Activated B cell treated with CpG ODN at 0.5 μM for 24 hours (primary cell): ENCODE measurements at regions of chr3 and their contacts with region 1.

Region 1: DNA sequence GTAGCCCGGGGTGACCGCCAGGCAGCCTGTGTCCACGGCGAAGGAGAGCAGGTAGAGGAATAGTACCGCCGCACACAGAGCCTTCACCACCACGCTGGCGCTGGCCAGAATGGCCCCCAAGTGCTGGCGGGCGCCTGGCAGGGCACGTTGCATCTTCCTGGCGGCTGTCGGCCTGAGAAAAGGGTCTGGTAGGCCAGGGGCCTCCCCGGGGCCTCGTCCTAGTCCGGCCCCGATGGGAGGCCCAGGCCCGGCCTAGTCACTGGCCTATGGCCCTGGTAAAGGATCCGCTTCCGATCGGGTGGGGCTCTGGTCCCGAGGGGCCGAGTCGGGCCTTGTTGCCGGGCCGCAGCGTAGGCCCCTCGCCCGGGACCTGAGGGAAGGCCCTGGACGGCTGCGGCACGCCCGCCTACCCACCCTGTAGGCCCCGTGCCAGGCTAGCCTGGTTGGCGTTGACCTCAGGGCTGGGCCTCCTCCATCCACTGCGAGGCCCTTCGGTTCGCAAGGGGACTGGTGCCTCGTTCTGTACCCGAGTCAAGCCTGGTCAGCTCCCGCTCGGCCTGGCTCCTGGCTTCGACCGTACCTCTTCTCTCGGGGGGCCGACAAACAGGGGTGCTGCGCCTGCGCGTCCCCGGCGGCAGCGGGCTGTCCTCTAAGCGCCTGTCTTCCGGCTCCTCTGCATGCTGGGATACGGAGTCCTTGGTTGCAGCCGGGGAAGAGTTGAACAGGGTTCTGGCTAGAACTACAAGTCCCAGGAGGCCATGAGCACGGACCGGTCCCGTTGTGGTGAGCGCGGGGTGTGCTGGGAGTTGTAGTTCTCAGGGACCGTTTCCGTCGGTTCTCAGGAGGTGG is at the start of gene TMEM115:
- DNase-seq: peak; percentile 88
- ATAC-seq: peak; percentile 100
- H3K4me3 Mint-ChIP-seq: peak within 1 kb of the TSS; percentile 96
- H3K27ac Mint-ChIP-seq: peak within 1 kb of the TSS; percentile 89
- H3K4me1 Mint-ChIP-seq: peaks cover 49% of the 10 kb centered on the region
- H3K27me3 Mint-ChIP-seq: no peaks in the 10 kb centered on the region
- CTCF ChIP-seq: no peak
- total RNA-seq, gene TMEM115: 18.7 and 19.6 TPM in 2 replicates

Region 2: DNA sequence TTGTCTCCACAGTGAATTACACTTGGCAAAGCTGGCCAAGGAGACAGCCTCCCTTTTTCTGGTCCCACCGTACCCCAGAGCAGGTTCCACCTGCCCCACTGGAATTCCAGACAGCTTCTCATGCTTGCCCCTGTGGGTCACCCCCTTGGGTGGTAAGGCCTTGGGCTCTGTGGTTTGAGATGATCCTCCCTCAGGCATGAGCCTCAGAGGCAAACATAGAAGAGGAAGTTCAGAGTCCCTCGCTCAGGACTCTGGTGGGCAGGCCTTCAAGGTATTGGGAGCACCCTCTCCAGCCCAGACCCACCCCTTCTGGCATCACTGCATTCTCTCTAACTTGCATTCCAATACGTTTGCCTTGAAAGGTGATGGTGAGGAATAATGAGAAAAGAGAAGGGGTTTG is 527.8 kb before region 1 on chr3:
- CTCF ChIA-PET with region 1: no interaction called
- POLR2A ChIA-PET with region 1: no interaction called
- intact Hi-C with region 1: no loop called
- DNase-seq: no peak
- ATAC-seq: no peak
- H3K4me3 Mint-ChIP-seq: no peak overlapping the region
- H3K27ac Mint-ChIP-seq: no peak overlapping the region
- H3K4me1 Mint-ChIP-seq: peaks cover 3% of the 10 kb centered on the region
- H3K27me3 Mint-ChIP-seq: no peaks in the 10 kb centered on the region
- CTCF ChIP-seq: no peak

Region 3: DNA sequence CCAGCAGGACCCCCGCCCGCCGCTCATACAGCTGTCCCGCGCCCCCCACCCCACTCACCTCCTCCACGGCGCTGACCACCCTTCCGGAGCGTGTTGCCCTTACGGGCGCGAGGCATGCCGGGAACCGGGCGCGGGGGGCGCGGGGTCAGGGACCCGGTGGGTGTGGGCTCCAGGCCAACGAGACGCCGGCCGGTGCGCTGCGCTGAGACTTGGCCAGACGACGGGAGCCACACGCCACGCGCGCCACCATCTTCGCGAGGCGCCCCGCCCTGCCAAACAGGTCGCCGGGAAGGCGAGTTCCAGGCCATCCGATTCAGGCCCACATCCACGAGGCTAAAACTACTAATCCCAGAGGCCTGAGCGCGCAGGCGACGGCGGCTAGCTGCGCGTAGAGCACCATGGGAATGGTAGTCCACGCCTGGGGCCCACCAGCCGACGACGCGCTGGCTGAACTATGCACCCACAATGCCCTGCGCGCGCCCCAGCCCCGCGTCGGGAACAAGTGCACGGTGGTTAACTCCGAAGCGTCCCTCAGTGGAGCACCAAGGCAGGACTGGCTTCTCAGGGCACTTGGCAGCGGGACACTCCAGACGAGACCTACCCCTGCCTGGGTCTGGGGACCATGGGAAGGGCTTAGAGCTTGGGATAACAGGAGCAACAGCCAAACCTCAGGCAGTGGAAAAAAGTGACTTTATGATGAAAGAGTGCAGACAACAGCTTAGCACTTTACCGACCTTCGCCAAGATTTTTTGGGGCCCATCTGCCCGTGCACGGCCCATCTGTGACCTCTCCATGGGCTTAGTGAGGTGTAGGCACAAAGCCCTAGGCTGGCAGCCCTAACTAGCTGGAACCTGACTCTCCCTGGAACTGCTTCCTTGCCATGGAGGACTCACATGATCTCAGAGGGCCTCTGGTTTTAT is 66.7 kb before region 1 on chr3 and contains the start of gene IFRD2:
- CTCF ChIA-PET with region 1: no interaction called
- POLR2A ChIA-PET with region 1: no interaction called
- intact Hi-C with region 1: loop called (anchors 1 kb)
- DNase-seq: peak; percentile 87
- ATAC-seq: peak; percentile 99
- H3K4me3 Mint-ChIP-seq: peak within 1 kb of the TSS; percentile 86
- H3K27ac Mint-ChIP-seq: peak within 1 kb of the TSS; percentile 95
- H3K4me1 Mint-ChIP-seq: peaks cover 20% of the 10 kb centered on the region
- H3K27me3 Mint-ChIP-seq: no peaks in the 10 kb centered on the region
- CTCF ChIP-seq: no peak
- total RNA-seq, gene IFRD2: 92.2 and 105 TPM in 2 replicates

Region 4: DNA sequence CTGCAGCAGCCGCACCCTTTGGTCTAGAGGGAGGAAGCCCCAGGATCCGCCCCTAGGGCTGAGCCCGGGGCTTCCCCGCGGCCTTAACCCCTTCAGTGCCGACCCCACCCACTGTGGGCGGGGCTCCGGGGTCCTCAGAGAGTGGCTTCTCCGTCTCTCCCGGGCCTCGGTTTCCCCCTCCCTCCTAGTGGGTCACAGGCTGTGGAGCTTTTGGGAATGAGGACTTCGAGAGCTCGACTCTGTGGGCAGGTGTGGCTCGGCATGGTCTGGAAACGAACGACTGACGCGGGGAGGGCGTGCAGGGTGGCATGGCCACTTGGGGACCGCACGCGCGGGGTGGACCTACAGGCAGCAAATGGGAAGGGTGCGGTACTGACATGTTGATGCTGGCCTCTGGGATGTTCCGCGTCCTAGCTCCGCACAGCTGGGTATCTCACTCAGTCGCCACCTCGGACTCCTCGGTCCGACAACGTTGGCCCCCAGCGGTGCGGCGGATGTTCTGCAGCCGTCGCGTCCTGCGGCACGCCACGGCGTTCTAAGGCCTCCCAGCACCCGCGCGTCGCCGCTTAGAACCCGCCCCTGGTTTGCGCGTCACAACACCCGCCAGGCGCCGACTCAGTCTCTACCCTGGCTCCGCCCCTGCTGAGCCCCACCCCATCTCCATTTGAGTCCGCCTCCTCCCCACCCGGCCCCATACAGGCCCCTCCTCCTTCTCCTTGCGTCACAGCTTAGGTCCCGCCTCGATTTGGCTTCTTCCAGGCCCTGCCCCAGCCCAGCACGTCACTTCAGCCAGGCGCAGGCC is 60.1 kb before region 1 on chr3 and contains the starts of genes HYAL3 and NAA80:
- CTCF ChIA-PET with region 1: no interaction called
- POLR2A ChIA-PET with region 1: interaction called, 5 read pairs
- intact Hi-C with region 1: loop called (anchors 1 kb)
- DNase-seq: peak; percentile 98
- ATAC-seq: peak; percentile 89
- H3K4me3 Mint-ChIP-seq: peak within 1 kb of the TSS; percentile 98
- H3K27ac Mint-ChIP-seq: peak within 1 kb of the TSS; percentile 98
- H3K4me1 Mint-ChIP-seq: peaks cover 30% of the 10 kb centered on the region
- H3K27me3 Mint-ChIP-seq: no peaks in the 10 kb centered on the region
- CTCF ChIP-seq: no peak
- total RNA-seq, gene HYAL3: 2.0 and 2.5 TPM in 2 replicates
- total RNA-seq, gene NAA80: 23.9 and 24.8 TPM in 2 replicates

Region 5: DNA sequence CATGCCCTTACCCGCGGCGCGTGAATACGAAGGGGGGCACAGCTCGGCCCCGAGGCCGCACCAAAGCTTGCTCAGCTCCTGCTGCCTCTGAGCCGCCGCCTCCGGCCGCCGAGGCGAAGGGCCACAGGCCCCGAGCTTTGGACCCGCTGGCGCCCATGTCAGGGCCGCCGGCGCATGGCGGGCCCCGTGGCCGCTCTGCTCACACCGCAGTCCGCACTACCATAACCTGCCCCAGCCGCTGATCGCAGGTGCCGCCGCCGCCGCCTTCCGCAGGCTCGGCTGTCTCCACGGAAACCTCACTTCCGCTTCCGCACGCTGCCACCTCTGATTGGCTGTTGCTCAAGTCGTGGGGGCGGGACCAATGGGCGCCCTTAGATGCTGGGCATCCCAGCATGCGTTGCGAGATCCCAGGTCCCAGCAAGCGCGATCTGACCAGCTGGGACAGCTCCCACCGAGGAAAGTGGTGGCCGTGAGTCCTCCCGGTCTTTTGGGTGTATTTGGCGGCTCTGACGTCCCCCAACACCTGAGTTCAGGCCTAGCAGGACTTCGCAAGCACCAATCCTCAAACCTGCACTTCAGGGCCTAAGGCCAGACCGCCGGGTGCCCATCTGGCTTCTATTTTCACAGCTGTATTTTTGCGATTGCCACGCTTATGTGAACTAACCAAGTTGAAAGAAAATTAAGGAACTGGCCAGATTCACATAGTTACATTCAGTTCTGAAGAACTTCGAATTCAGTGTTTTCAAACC is 31.0 kb before region 1 on chr3 and contains the start of gene TUSC2:
- CTCF ChIA-PET with region 1: no interaction called
- POLR2A ChIA-PET with region 1: interaction called, 5 read pairs
- intact Hi-C with region 1: loop called (anchors 1 kb)
- DNase-seq: peak; percentile 91
- ATAC-seq: peak; percentile 96
- H3K4me3 Mint-ChIP-seq: peak within 1 kb of the TSS; percentile 92
- H3K27ac Mint-ChIP-seq: peak within 1 kb of the TSS; percentile 84
- H3K4me1 Mint-ChIP-seq: peaks cover 25% of the 10 kb centered on the region
- H3K27me3 Mint-ChIP-seq: no peaks in the 10 kb centered on the region
- CTCF ChIP-seq: no peak
- total RNA-seq, gene TUSC2: 32.2 and 33.4 TPM in 2 replicates

Region 6: GRCh38 chr3:50337191-50337841 is 21.8 kb before region 1 on chr3:
- CTCF ChIA-PET with region 1: no interaction called
- POLR2A ChIA-PET with region 1: interaction called, 12 read pairs
- intact Hi-C with region 1: loop called (anchors 1 kb)
- DNase-seq: peak; percentile 90
- ATAC-seq: peak; percentile 83
- H3K4me3 Mint-ChIP-seq: peak overlapping the region; percentile 95
- H3K27ac Mint-ChIP-seq: peak overlapping the region; percentile 98
- H3K4me1 Mint-ChIP-seq: peaks cover 66% of the 10 kb centered on the region
- H3K27me3 Mint-ChIP-seq: no peaks in the 10 kb centered on the region
- CTCF ChIP-seq: no peak

Region 7: GRCh38 chr3:50519471-50520089 is 160.4 kb after region 1 on chr3:
- CTCF ChIA-PET with region 1: no interaction called
- POLR2A ChIA-PET with region 1: no interaction called
- intact Hi-C with region 1: loop called (anchors 5 kb)
- DNase-seq: peak; percentile 52
- ATAC-seq: peak; percentile 38
- H3K4me3 Mint-ChIP-seq: no peak overlapping the region
- H3K27ac Mint-ChIP-seq: no peak overlapping the region
- H3K4me1 Mint-ChIP-seq: peaks cover 27% of the 10 kb centered on the region
- H3K27me3 Mint-ChIP-seq: peaks cover 3% of the 10 kb centered on the region
- CTCF ChIP-seq: no peak

Region 8: GRCh38 chr3:51384726-51385473 is 1025.8 kb after region 1 on chr3 and contains the start of gene MANF:
- CTCF ChIA-PET with region 1: no interaction called
- POLR2A ChIA-PET with region 1: no interaction called
- intact Hi-C with region 1: loop called (anchors 2 kb)
- DNase-seq: peak; percentile 89
- ATAC-seq: peak; percentile 95
- H3K4me3 Mint-ChIP-seq: peak within 1 kb of the TSS; percentile 99
- H3K27ac Mint-ChIP-seq: peak within 1 kb of the TSS; percentile 98
- H3K4me1 Mint-ChIP-seq: peaks cover 49% of the 10 kb centered on the region
- H3K27me3 Mint-ChIP-seq: no peaks in the 10 kb centered on the region
- CTCF ChIP-seq: no peak
- total RNA-seq, gene MANF: 64.2 and 66.1 TPM in 2 replicates